ENCODE measurements at regions of chr17 and their contacts with region 1.

Region 1: DNA sequence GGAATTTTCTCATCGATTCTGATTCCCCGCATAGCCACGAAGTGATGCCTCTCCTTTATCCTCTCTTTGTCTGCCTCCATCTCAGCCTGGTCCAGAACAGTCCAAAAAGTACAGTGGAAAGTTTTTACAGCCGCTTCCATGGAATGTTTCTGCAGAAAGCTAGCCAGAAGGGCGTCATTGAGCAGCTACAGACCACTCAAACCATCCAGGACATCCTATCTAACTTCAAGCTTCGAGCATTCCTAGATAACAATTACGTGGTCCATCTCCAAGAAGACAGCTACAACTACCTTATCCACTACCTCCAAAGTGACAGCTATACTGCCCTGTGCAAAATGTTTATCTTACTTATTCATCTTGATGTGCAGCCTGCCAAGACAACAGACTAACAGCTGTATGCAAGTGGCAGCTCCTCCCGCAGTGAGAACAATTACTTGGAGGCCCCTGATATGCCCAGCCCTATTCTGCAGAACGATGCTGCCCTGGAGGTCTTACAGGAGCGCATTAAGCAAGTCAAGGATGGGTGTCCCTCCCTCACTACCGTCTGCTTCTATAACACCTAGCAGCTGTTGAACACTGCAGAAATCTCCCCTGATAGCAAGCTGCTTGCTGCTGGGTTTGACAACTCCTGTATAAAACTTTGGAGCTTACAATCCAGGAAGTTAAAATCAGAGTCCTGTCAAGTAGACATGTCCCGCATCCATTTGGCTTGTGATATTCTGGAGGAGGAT is 38.9 kb downstream of the SLFN12L start:
- DNase-seq: no peak
- ATAC-seq: no peak
- H3K4me3 ChIP-seq: no peak overlapping the region
- H3K4me3 Mint-ChIP-seq: peak overlapping the region; percentile 24 to 83 (median 66)
- H3K27ac ChIP-seq: no peak overlapping the region
- H3K27ac Mint-ChIP-seq: peak overlapping the region in 6 of 9 donors; percentile 26 to 75 (median 40)
- H3K4me1 ChIP-seq: peaks cover 4 to 6% of the 10 kb centered on the region in 2 donors
- H3K4me1 Mint-ChIP-seq: peaks cover 42 to 86% (median 71%) of the 10 kb centered on the region in 7 donors
- H3K27me3 ChIP-seq: no peaks in the 10 kb centered on the region
- H3K27me3 Mint-ChIP-seq: no peaks in the 10 kb centered on the region

Region 2: GRCh38 chr17:35103271-35103670 is 395.3 kb before region 1 on chr17:
- CTCF ChIA-PET with region 1: no interaction called
- POLR2A ChIA-PET with region 1: no interaction called
- intact Hi-C with region 1: no loop called
- DNase-seq: no peak
- ATAC-seq: no peak
- H3K4me3 ChIP-seq: no peak overlapping the region
- H3K4me3 Mint-ChIP-seq: no peak overlapping the region
- H3K27ac ChIP-seq: no peak overlapping the region
- H3K27ac Mint-ChIP-seq: no peak overlapping the region
- H3K4me1 ChIP-seq: no peaks in the 10 kb centered on the region
- H3K4me1 Mint-ChIP-seq: peaks cover 0 to 5% (median 0%) of the 10 kb centered on the region in 7 donors
- H3K27me3 ChIP-seq: no peaks in the 10 kb centered on the region
- H3K27me3 Mint-ChIP-seq: no peaks in the 10 kb centered on the region

Region 3: GRCh38 chr17:35510052-35510451 is 11.4 kb after region 1 on chr17:
- CTCF ChIA-PET with region 1: no interaction called
- POLR2A ChIA-PET with region 1: interaction called, 5 read pairs
- intact Hi-C with region 1: loop called in 1 of 2 experiments (anchors 2 kb)
- DNase-seq: no peak
- ATAC-seq: no peak
- H3K4me3 ChIP-seq: no peak overlapping the region
- H3K4me3 Mint-ChIP-seq: peak overlapping the region in 1 of 10 donors; percentile 14
- H3K27ac ChIP-seq: no peak overlapping the region
- H3K27ac Mint-ChIP-seq: peak overlapping the region in 1 of 9 donors; percentile 52
- H3K4me1 ChIP-seq: peaks cover 0 to 20% of the 10 kb centered on the region in 2 donors
- H3K4me1 Mint-ChIP-seq: peaks cover 23 to 52% (median 43%) of the 10 kb centered on the region in 7 donors
- H3K27me3 ChIP-seq: no peaks in the 10 kb centered on the region
- H3K27me3 Mint-ChIP-seq: no peaks in the 10 kb centered on the region

Region 4: GRCh38 chr17:35519439-35519838 is 20.8 kb after region 1 on chr17:
- CTCF ChIA-PET with region 1: no interaction called
- POLR2A ChIA-PET with region 1: interaction called, 4 read pairs
- intact Hi-C with region 1: loop called in 1 of 2 experiments (anchors 2 kb)
- DNase-seq: no peak
- ATAC-seq: no peak
- H3K4me3 ChIP-seq: peak overlapping the region; percentile 25
- H3K4me3 Mint-ChIP-seq: peak overlapping the region in 9 of 10 donors; percentile 6 to 82 (median 57)
- H3K27ac ChIP-seq: no peak overlapping the region
- H3K27ac Mint-ChIP-seq: peak overlapping the region in 5 of 9 donors; percentile 49 to 80 (median 74)
- H3K4me1 ChIP-seq: peaks cover 41 to 86% of the 10 kb centered on the region in 2 donors
- H3K4me1 Mint-ChIP-seq: peaks cover 59 to 98% (median 93%) of the 10 kb centered on the region in 7 donors
- H3K27me3 ChIP-seq: no peaks in the 10 kb centered on the region
- H3K27me3 Mint-ChIP-seq: peaks cover 0 to 4% (median 0%) of the 10 kb centered on the region in 5 donors

Region 5: GRCh38 chr17:35653619-35654361 is 155.2 kb after region 1 on chr17:
- CTCF ChIA-PET with region 1: no interaction called
- POLR2A ChIA-PET with region 1: no interaction called
- intact Hi-C with region 1: no loop called
- DNase-seq: no peak
- ATAC-seq: no peak
- H3K4me3 ChIP-seq: no peak overlapping the region
- H3K4me3 Mint-ChIP-seq: no peak overlapping the region
- H3K27ac ChIP-seq: no peak overlapping the region
- H3K27ac Mint-ChIP-seq: peak overlapping the region in 2 of 9 donors; percentile 16 to 30
- H3K4me1 ChIP-seq: no peaks in the 10 kb centered on the region
- H3K4me1 Mint-ChIP-seq: peaks cover 0 to 19% (median 9%) of the 10 kb centered on the region in 7 donors
- H3K27me3 ChIP-seq: no peaks in the 10 kb centered on the region
- H3K27me3 Mint-ChIP-seq: no peaks in the 10 kb centered on the region

Measured in naive thymus-derived CD4-positive, alpha-beta T cell (primary cell).